Heart left ventricle (tissue), 16 donors: ENCODE measurements at regions of chr18 and their contacts with region 1.

Region 1: GRCh38 chr18:59837586-59837985 is 62.2 kb upstream of the PMAIP1 start:
- DNase-seq: peak in 2 of 5 donors; percentile 17 to 20
- ATAC-seq: peak in 2 of 4 donors; percentile 39 to 46
- H3K4me3 ChIP-seq: no peak overlapping the region
- H3K27ac ChIP-seq: no peak overlapping the region
- H3K4me1 ChIP-seq: no peaks in the 10 kb centered on the region
- H3K27me3 ChIP-seq: peaks cover 0 to 21% (median 0%) of the 10 kb centered on the region in 9 donors
- CTCF ChIP-seq: peak; percentile 71 to 90 (median 81)
- POLR2A ChIP-seq: no peak

Region 2: DNA sequence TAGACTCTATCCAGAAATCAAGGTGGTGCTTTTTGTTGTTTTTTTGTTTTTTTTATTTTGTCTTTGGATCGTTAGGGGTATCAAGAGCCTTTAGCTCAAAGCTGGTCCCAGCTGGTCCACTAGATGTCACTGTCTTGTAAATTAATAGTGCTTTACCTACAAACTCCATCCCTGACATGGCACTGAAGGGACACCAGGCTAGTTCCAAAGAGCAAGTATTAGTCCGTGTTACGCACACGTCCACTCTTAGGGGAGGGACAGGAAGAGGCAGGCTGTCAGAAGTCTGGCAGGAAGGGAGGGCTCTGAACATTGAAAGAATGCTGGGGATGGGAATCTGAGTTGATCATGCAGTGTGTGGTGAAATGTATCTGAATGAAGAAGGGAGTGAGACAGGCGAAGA is 54.4 kb before region 1 on chr18:
- intact Hi-C with region 1: no loop called
- DNase-seq: no peak
- ATAC-seq: peak in 2 of 4 donors; percentile 11 to 43
- H3K4me3 ChIP-seq: no peak overlapping the region
- H3K27ac ChIP-seq: no peak overlapping the region
- H3K4me1 ChIP-seq: peaks cover 0 to 2% (median 0%) of the 10 kb centered on the region in 12 donors
- H3K27me3 ChIP-seq: peaks cover 0 to 6% (median 0%) of the 10 kb centered on the region in 9 donors
- CTCF ChIP-seq: peak in 11 of 12 donors; percentile 15 to 53 (median 29)
- POLR2A ChIP-seq: no peak

Region 3: GRCh38 chr18:59961086-59961485 is 123.5 kb after region 1 on chr18:
- intact Hi-C with region 1: loop called in 1 of 10 experiments (anchors 10 kb)
- DNase-seq: no peak
- ATAC-seq: no peak
- H3K4me3 ChIP-seq: no peak overlapping the region
- H3K27ac ChIP-seq: no peak overlapping the region
- H3K4me1 ChIP-seq: peaks cover 0 to 4% (median 0%) of the 10 kb centered on the region in 12 donors
- H3K27me3 ChIP-seq: peaks cover 0 to 11% (median 0%) of the 10 kb centered on the region in 9 donors
- CTCF ChIP-seq: no peak
- POLR2A ChIP-seq: no peak

Region 4: DNA sequence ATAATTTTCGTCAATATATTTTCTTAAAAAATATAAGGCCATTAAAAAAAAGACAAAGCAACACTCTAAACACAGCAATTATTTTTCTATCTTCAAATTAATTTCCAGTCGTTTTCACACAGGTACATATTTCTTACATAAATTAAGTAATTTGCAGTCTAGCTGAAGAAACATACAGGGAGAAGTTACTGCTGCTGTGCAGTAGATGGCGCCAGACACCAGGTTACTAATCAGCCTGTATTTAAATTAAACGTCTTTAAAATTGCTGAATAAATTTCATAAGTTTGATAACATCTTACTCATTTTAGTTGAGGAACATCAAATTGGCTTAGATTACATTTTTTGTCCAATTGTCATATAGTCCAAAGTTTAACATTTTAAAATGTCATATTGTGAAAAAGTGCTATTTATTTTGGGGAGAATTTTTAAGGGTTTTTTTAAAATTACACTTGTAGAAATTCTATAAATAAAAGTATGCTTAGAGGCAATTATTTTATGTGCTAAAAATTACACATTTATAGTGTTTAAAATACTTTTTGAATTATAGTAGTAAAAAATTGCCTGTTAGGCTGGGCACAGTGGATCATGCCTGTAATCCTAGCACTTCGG is 150.6 kb after region 1 on chr18:
- intact Hi-C with region 1: loop called in 1 of 10 experiments (anchors 5 kb)
- DNase-seq: peak in 3 of 5 donors; percentile 19 to 28 (median 27)
- ATAC-seq: no peak
- H3K4me3 ChIP-seq: no peak overlapping the region
- H3K27ac ChIP-seq: no peak overlapping the region
- H3K4me1 ChIP-seq: no peaks in the 10 kb centered on the region
- H3K27me3 ChIP-seq: peaks cover 0 to 25% (median 4%) of the 10 kb centered on the region in 9 donors
- CTCF ChIP-seq: peak; percentile 74 to 98 (median 86)
- POLR2A ChIP-seq: no peak

Region 5: GRCh38 chr18:60554967-60555366 is 717.4 kb after region 1 on chr18:
- intact Hi-C with region 1: loop called in 1 of 10 experiments (anchors 10 kb)
- DNase-seq: no peak
- ATAC-seq: no peak
- H3K4me3 ChIP-seq: no peak overlapping the region
- H3K27ac ChIP-seq: no peak overlapping the region
- H3K4me1 ChIP-seq: no peaks in the 10 kb centered on the region
- H3K27me3 ChIP-seq: peaks cover 0 to 12% (median 0%) of the 10 kb centered on the region in 9 donors
- CTCF ChIP-seq: no peak
- POLR2A ChIP-seq: no peak